Natural killer cell (primary cell): ENCODE measurements at regions of chr13 and their contacts with region 1.

Region 1: GRCh38 chr13:40777166-40777808 is 6.3 kb upstream of the MRPS31 start:
- DNase-seq: peak; percentile 30 to 79
- ATAC-seq: peak; percentile 77 to 86 (median 82)
- H3K4me3 ChIP-seq: no peak overlapping the region
- H3K4me3 Mint-ChIP-seq: peak overlapping the region; percentile 79
- H3K27ac ChIP-seq: peak overlapping the region; percentile 70
- H3K27ac Mint-ChIP-seq: peak overlapping the region; percentile 87 to 94
- H3K4me1 ChIP-seq: peaks cover 20% of the 10 kb centered on the region
- H3K4me1 Mint-ChIP-seq: peaks cover 19 to 24% of the 10 kb centered on the region in 2 donors
- H3K27me3 ChIP-seq: no peaks in the 10 kb centered on the region
- H3K27me3 Mint-ChIP-seq: no peaks in the 10 kb centered on the region
- CTCF ChIP-seq: peak; percentile 80

Region 2: DNA sequence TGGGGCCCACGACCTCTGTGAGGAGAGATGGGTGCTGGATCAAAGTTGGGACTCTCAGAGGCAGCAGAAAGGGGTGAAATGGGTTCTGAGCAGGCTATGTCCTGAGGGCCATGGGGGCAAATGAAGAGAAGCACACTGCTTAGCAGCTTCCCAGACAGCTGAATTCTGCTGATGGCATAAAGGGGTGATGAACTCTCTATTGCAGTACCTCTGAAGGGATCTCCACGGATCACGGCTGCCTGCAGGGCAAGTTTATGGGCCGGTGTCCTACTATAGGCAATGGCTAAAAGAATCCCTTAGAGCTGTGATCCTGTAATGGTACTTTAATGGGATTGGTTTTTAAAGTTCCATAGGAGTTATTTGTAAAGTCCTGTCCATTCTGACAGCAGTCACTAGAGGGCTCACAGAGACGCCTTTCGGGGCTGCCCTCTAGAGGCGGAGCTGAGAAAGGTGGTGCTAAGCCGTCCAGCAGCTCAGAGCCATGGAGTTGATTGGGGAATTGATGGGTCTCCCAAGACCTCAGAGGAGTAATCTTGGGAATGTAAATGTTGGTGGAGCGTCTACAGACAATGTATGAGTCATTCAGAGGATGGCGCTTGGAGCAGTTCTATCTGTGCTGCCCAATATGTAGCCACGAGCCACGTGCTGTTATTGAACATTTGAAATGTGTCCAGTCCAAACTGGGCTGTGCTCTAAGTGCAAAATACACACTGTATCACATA is 834.6 kb before region 1 on chr13:
- intact Hi-C with region 1: loop called (anchors 2 kb)
- DNase-seq: peak; percentile 41 to 83
- ATAC-seq: peak; percentile 89 to 100 (median 99)
- H3K4me3 ChIP-seq: no peak overlapping the region
- H3K4me3 Mint-ChIP-seq: no peak overlapping the region
- H3K27ac ChIP-seq: no peak overlapping the region
- H3K27ac Mint-ChIP-seq: no peak overlapping the region
- H3K4me1 ChIP-seq: no peaks in the 10 kb centered on the region
- H3K4me1 Mint-ChIP-seq: peaks cover 0 to 6% of the 10 kb centered on the region in 2 donors
- H3K27me3 ChIP-seq: no peaks in the 10 kb centered on the region
- H3K27me3 Mint-ChIP-seq: peaks cover 9 to 19% of the 10 kb centered on the region in 2 donors
- CTCF ChIP-seq: peak; percentile 98

Region 3: GRCh38 chr13:40069173-40070044 is 707.9 kb before region 1 on chr13:
- intact Hi-C with region 1: loop called (anchors 2 kb)
- DNase-seq: peak; percentile 61 to 88
- ATAC-seq: peak; percentile 81 to 97 (median 91)
- H3K4me3 ChIP-seq: no peak overlapping the region
- H3K4me3 Mint-ChIP-seq: no peak overlapping the region
- H3K27ac ChIP-seq: no peak overlapping the region
- H3K27ac Mint-ChIP-seq: no peak overlapping the region
- H3K4me1 ChIP-seq: no peaks in the 10 kb centered on the region
- H3K4me1 Mint-ChIP-seq: no peaks in the 10 kb centered on the region
- H3K27me3 ChIP-seq: no peaks in the 10 kb centered on the region
- H3K27me3 Mint-ChIP-seq: peaks cover 0 to 11% of the 10 kb centered on the region in 2 donors
- CTCF ChIP-seq: peak; percentile 78

Region 4: GRCh38 chr13:40813661-40814454 is 36.6 kb after region 1 on chr13:
- intact Hi-C with region 1: loop called (anchors 1 kb)
- DNase-seq: peak in 1 of 2 donors; percentile 43
- ATAC-seq: peak; percentile 57 to 66 (median 64)
- H3K4me3 ChIP-seq: no peak overlapping the region
- H3K4me3 Mint-ChIP-seq: no peak overlapping the region
- H3K27ac ChIP-seq: no peak overlapping the region
- H3K27ac Mint-ChIP-seq: no peak overlapping the region
- H3K4me1 ChIP-seq: peaks cover 3% of the 10 kb centered on the region
- H3K4me1 Mint-ChIP-seq: no peaks in the 10 kb centered on the region
- H3K27me3 ChIP-seq: no peaks in the 10 kb centered on the region
- H3K27me3 Mint-ChIP-seq: no peaks in the 10 kb centered on the region
- CTCF ChIP-seq: peak; percentile 46

Region 5: DNA sequence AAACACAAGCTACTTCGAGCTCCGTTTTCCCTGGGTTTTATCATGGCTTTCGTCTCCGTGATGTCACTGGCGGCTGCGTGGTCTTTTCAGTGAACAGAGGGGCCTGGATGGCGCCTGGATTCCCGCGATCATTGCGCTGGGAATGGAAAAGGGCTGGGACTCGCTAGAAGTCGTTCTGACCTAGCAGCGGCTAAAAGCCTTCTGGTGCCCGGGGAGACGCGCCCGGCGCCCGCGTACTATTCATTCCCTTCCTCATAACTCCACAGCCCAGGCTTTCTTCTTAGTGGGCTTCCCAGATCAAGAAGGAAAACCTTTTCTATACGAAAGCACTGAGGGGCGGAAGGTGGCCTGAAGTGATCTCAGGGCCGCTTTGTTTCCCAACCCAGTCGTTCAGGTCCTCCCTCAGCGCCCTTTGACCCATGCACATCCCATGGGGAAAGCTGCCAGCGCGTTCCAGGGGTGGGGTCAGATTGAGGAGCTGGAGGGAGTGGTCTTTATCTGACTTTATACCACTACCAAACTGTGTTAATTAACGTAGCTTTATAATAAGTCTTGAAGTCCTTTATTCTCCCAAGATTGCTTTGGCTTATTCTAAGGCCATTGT is 145.3 kb after region 1 on chr13:
- intact Hi-C with region 1: loop called (anchors 2 kb)
- DNase-seq: peak in 1 of 2 donors; percentile 17
- ATAC-seq: no peak
- H3K4me3 ChIP-seq: no peak overlapping the region
- H3K4me3 Mint-ChIP-seq: peak overlapping the region; percentile 97
- H3K27ac ChIP-seq: no peak overlapping the region
- H3K27ac Mint-ChIP-seq: peak overlapping the region; percentile 90
- H3K4me1 ChIP-seq: peaks cover 12% of the 10 kb centered on the region
- H3K4me1 Mint-ChIP-seq: peaks cover 19 to 20% of the 10 kb centered on the region in 2 donors
- H3K27me3 ChIP-seq: no peaks in the 10 kb centered on the region
- H3K27me3 Mint-ChIP-seq: no peaks in the 10 kb centered on the region
- CTCF ChIP-seq: no peak